A673 (cell line): ENCODE measurements at regions of chr1 and their contacts with region 1.

Region 1: GRCh38 chr1:28822788-28823187 is 10.8 kb downstream of the OPRD1 start:
- DNase-seq: no peak
- H3K4me3 ChIP-seq: no peak overlapping the region
- H3K27ac ChIP-seq: no peak overlapping the region
- H3K4me1 ChIP-seq: no peaks in the 10 kb centered on the region
- H3K27me3 ChIP-seq: no peaks in the 10 kb centered on the region
- CTCF ChIP-seq: no peak

Region 2: DNA sequence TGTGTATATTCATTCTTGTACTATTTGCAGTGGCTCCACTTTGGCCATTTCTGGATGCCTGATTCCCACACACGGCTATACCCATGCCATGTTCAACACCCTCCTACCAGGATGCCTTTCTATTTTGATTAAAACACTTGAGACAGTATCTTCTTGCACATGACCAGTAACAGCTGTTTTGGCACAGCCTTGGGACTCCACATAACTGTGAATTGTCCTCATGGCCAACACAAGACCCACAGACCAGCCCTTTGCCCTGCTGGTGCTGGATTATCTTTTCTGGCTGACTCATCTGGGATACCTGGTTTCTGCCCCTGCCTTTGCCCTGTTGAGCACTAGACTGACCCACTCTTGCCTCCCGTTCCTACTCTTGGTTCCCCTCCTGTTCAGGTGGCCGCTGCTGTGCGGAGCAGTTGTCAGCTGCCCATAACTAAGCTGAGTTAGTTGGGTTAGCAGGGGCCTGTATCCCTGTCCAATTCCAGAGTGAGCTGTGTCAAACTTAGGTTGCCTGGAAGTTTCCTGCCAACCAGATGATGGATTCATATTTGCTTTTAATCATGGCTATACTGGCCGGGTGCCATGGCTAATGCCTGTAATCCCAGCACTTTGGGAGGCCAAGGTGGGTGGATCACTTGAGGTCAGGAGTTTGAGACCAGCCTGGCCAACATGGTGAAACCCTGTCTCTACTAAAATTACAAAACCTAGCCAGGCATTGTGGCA is 723.6 kb before region 1 on chr1:
- CTCF ChIA-PET with region 1: interaction called, 10 read pairs
- POLR2A ChIA-PET with region 1: no interaction called
- intact Hi-C with region 1: no loop called
- DNase-seq: no peak
- H3K4me3 ChIP-seq: no peak overlapping the region
- H3K27ac ChIP-seq: no peak overlapping the region
- H3K4me1 ChIP-seq: no peaks in the 10 kb centered on the region
- H3K27me3 ChIP-seq: no peaks in the 10 kb centered on the region
- CTCF ChIP-seq: no peak

Region 3: GRCh38 chr1:28926629-28927265 is 104.0 kb after region 1 on chr1:
- CTCF ChIA-PET with region 1: no interaction called
- POLR2A ChIA-PET with region 1: no interaction called
- intact Hi-C with region 1: no loop called
- DNase-seq: peak; percentile 54
- H3K4me3 ChIP-seq: peak overlapping the region; percentile 27
- H3K27ac ChIP-seq: peak overlapping the region; percentile 86
- H3K4me1 ChIP-seq: peaks cover 40% of the 10 kb centered on the region
- H3K27me3 ChIP-seq: no peaks in the 10 kb centered on the region
- CTCF ChIP-seq: no peak

Region 4: DNA sequence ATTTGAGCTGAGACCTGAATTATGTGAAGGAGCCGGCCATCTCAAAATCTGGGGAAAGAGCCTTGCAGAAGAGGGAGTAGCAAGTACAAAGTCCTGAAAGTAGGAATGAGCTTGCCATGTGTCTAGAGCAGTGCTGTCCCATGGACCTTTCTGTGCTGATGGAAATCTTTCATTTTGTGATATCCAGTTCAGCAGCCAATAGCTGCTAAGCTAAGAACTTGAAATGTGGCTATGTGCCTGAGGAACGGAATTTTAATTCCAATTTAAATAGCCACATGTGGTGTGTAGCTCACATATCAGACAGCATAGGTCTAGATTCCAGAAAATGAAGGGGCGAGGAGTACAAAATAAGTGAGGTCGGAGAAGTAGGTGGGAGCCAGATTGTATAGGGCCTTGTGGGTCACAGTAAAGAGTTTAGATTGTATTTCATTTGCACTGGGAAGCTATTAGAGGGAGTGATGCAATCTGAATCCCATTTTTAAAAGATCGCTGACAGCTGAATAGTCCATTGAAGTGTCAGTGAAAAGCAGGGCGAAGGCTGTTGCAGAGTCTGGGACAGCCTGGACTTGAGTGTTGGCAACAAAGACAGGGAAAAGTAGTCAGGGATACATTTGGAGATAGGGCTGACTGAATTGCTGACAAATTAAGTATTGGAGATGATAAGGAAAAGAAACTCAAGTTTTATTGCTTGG is 220.6 kb after region 1 on chr1:
- CTCF ChIA-PET with region 1: no interaction called
- POLR2A ChIA-PET with region 1: no interaction called
- intact Hi-C with region 1: no loop called
- DNase-seq: no peak
- H3K4me3 ChIP-seq: no peak overlapping the region
- H3K27ac ChIP-seq: peak overlapping the region; percentile 40
- H3K4me1 ChIP-seq: peaks cover 4% of the 10 kb centered on the region
- H3K27me3 ChIP-seq: no peaks in the 10 kb centered on the region
- CTCF ChIP-seq: no peak